ENCODE measurements at regions of chr1 and their contacts with region 1.

Region 1: GRCh38 chr1:88009916-88010315 is 674.2 kb upstream of the PKN2 start:
- DNase-seq: no peak
- H3K4me3 Mint-ChIP-seq: no peak overlapping the region
- H3K27ac Mint-ChIP-seq: no peak overlapping the region
- H3K4me1 Mint-ChIP-seq: no peaks in the 10 kb centered on the region
- H3K27me3 Mint-ChIP-seq: no peaks in the 10 kb centered on the region
- CTCF ChIP-seq: peak; percentile 35

Region 2: GRCh38 chr1:88061492-88062177 is 51.7 kb after region 1 on chr1:
- CTCF ChIA-PET with region 1: no interaction called
- intact Hi-C with region 1: loop called (anchors 5 kb)
- DNase-seq: peak; percentile 69
- H3K4me3 Mint-ChIP-seq: no peak overlapping the region
- H3K27ac Mint-ChIP-seq: no peak overlapping the region
- H3K4me1 Mint-ChIP-seq: peaks cover 35% of the 10 kb centered on the region
- H3K27me3 Mint-ChIP-seq: no peaks in the 10 kb centered on the region
- CTCF ChIP-seq: peak; percentile 71

Region 3: DNA sequence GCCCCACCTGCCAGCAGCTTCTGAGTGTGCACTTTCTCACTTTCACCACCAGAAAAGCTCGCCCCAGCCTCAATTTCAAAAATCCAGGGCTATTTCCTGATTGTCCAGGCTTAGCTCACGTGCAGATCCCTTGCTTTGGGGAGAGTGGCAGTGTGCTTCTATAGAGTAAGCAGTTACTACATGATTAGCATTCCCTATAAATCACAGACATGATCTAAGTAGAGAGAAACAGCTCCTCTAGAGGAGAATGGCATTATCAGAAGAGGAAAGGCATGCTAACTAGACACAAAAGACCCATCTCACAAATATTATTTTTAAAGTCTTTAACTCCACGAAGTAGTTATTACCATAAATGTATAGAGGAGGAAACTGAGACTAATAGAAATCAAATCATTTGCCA is 218.2 kb after region 1 on chr1:
- CTCF ChIA-PET with region 1: no interaction called
- intact Hi-C with region 1: no loop called
- DNase-seq: no peak
- H3K4me3 Mint-ChIP-seq: no peak overlapping the region
- H3K27ac Mint-ChIP-seq: no peak overlapping the region
- H3K4me1 Mint-ChIP-seq: peaks cover 8% of the 10 kb centered on the region
- H3K27me3 Mint-ChIP-seq: no peaks in the 10 kb centered on the region
- CTCF ChIP-seq: no peak